ENCODE measurements at regions of chr3 and their contacts with region 1.

Region 1: DNA sequence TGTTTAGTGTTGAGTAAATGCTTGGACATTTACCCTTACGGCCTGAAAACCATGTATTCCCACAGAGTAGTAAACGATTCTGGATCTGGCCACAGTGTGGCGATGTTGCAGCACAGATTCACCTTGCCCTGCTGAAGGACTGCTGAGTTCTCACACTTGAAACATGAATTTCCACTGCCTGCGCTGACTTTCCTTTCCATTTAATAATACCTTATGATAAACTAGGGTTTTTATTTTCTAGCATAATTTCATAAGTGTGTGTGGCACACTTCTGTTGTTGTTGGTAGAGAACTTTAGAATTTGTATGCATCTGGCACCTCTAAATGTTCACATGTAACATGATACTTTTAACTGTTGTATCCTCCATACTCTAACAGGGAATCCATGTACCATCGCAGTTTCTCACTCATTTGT is 53.9 kb downstream of the C3orf38 start:
- DNase-seq: no peak

Region 2: DNA sequence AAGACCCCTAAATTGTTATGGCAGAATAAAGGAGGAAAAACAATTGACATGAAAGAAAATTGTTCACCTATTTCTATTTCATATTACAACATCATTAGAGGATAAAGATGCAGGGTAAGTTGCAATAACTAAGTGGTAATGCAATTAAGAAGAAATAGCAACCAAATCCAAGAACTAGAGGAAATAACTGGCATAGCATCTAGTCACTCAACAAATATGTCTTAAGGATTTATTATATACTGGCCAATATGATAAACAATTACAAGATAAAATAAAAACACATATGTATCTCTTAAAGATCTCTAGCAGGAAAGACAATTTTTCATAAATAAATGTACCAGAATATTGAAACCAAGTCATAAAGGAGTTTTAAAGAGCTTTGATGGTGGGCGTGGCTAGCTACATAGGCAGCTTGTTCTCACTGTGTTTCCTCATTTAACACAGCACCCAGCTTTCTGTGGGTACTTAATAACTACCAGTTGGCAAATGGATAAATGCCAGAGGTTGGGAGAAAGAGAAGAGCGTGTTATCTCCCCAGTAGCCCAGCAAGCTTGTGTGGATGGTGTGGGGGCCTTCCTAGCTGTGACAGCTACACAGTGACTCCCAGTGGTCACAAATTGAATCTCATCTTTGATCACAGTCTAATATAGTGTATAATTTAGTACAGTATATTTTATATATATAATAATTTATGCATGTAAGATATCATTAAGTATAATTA is 1887.7 kb after region 1 on chr3:
- intact Hi-C with region 1: loop called (anchors 10 kb)
- DNase-seq: no peak

Region 3: DNA sequence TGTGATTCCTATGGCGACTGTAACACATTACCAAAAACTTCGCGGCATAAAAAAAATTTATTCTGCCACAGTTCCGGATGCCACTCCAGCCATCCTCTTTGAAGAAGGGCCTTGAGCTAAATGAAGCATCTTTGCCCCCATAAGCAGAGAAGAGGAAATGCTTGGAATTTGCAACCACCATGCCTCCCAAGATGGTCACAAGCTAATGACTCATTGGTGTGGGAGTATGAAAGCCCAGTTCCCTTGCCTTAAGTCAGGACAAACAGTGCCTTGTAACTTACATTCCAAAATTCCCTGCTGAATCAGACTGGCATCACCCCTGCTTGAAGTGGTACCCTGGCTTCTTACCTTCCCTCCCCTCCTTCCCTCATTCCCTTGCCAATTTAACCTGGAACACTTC is 1981.2 kb after region 1 on chr3:
- intact Hi-C with region 1: loop called (anchors 5 kb)
- DNase-seq: no peak

Measured in cardiac septum (tissue), 1 donor.